PC-3 (cell line): ENCODE measurements at regions of chr1 and their contacts with region 1.

Region 1: GRCh38 chr1:240732390-240732789 is 120.4 kb upstream of the GREM2 start:
- DNase-seq: peak; percentile 88
- ATAC-seq: peak; percentile 92
- H3K4me3 ChIP-seq: no peak overlapping the region
- H3K27ac ChIP-seq: no peak overlapping the region
- H3K4me1 ChIP-seq: peaks cover 8% of the 10 kb centered on the region
- H3K27me3 ChIP-seq: no peaks in the 10 kb centered on the region
- CTCF ChIP-seq: peak; percentile 93

Region 2: GRCh38 chr1:240719953-240720700 is 12.3 kb before region 1 on chr1:
- CTCF ChIA-PET with region 1: no interaction called
- POLR2A ChIA-PET with region 1: no interaction called
- intact Hi-C with region 1: no loop called
- DNase-seq: no peak
- ATAC-seq: no peak
- H3K4me3 ChIP-seq: no peak overlapping the region
- H3K27ac ChIP-seq: no peak overlapping the region
- H3K4me1 ChIP-seq: no peaks in the 10 kb centered on the region
- H3K27me3 ChIP-seq: peaks cover 67% of the 10 kb centered on the region
- CTCF ChIP-seq: no peak

Region 3: GRCh38 chr1:240784776-240785175 is 52.4 kb after region 1 on chr1:
- CTCF ChIA-PET with region 1: interaction called, 3 read pairs
- POLR2A ChIA-PET with region 1: no interaction called
- intact Hi-C with region 1: loop called (anchors 5 kb)
- DNase-seq: no peak
- ATAC-seq: no peak
- H3K4me3 ChIP-seq: no peak overlapping the region
- H3K27ac ChIP-seq: no peak overlapping the region
- H3K4me1 ChIP-seq: peaks cover 24% of the 10 kb centered on the region
- H3K27me3 ChIP-seq: no peaks in the 10 kb centered on the region
- CTCF ChIP-seq: no peak

Region 4: GRCh38 chr1:240854367-240854766 is 122.0 kb after region 1 on chr1:
- CTCF ChIA-PET with region 1: interaction called, 11 read pairs
- POLR2A ChIA-PET with region 1: no interaction called
- intact Hi-C with region 1: loop called (anchors 1 kb)
- DNase-seq: peak; percentile 87
- ATAC-seq: peak; percentile 99
- H3K4me3 ChIP-seq: no peak overlapping the region
- H3K27ac ChIP-seq: no peak overlapping the region
- H3K4me1 ChIP-seq: peaks cover 8% of the 10 kb centered on the region; the same call in 1 of the 2 replicates
- H3K27me3 ChIP-seq: peaks cover 29% of the 10 kb centered on the region
- CTCF ChIP-seq: peak; percentile 76

Region 5: GRCh38 chr1:240888039-240888786 is 155.8 kb after region 1 on chr1:
- CTCF ChIA-PET with region 1: interaction called, 3 read pairs
- POLR2A ChIA-PET with region 1: no interaction called
- intact Hi-C with region 1: loop called (anchors 10 kb)
- DNase-seq: peak; percentile 83
- ATAC-seq: peak; percentile 64
- H3K4me3 ChIP-seq: no peak overlapping the region
- H3K27ac ChIP-seq: no peak overlapping the region
- H3K4me1 ChIP-seq: no peaks in the 10 kb centered on the region
- H3K27me3 ChIP-seq: peaks cover 25% of the 10 kb centered on the region
- CTCF ChIP-seq: peak; percentile 99

Region 6: DNA sequence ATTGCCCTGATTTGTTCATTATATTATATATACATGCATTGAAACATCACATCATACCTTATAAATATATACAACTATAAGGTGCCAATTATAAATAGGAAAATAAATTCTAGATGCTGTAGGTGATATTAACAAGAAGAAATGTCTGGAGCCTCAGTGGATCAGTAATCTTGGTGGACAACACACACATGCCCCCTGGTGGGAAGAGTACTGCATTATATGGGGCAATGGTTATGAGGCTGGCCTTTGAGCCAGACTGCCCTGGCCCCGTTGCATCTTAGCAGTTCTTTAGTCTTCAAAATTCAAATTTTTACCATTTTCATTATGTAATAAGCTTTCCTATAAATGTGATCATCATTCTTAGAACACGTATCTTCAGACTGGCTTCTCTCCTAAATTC is 214.5 kb after region 1 on chr1:
- CTCF ChIA-PET with region 1: no interaction called
- POLR2A ChIA-PET with region 1: no interaction called
- intact Hi-C with region 1: loop called (anchors 1 kb)
- DNase-seq: peak; percentile 89
- ATAC-seq: peak; percentile 99
- H3K4me3 ChIP-seq: no peak overlapping the region
- H3K27ac ChIP-seq: no peak overlapping the region
- H3K4me1 ChIP-seq: no peaks in the 10 kb centered on the region
- H3K27me3 ChIP-seq: peaks cover 49% of the 10 kb centered on the region
- CTCF ChIP-seq: peak; percentile 98

Region 7: GRCh38 chr1:241396747-241397681 is 664.6 kb after region 1 on chr1:
- CTCF ChIA-PET with region 1: no interaction called
- POLR2A ChIA-PET with region 1: no interaction called
- intact Hi-C with region 1: loop called (anchors 10 kb)
- DNase-seq: peak; percentile 60
- ATAC-seq: peak; percentile 56
- H3K4me3 ChIP-seq: no peak overlapping the region
- H3K27ac ChIP-seq: no peak overlapping the region
- H3K4me1 ChIP-seq: peaks cover 26% of the 10 kb centered on the region
- H3K27me3 ChIP-seq: no peaks in the 10 kb centered on the region
- CTCF ChIP-seq: no peak

Region 8: GRCh38 chr1:241499910-241500309 is 767.5 kb after region 1 on chr1:
- CTCF ChIA-PET with region 1: no interaction called
- POLR2A ChIA-PET with region 1: no interaction called
- intact Hi-C with region 1: loop called (anchors 10 kb)
- DNase-seq: peak; percentile 82
- ATAC-seq: peak; percentile 82
- H3K4me3 ChIP-seq: no peak overlapping the region
- H3K27ac ChIP-seq: no peak overlapping the region
- H3K4me1 ChIP-seq: no peaks in the 10 kb centered on the region
- H3K27me3 ChIP-seq: no peaks in the 10 kb centered on the region
- CTCF ChIP-seq: peak; percentile 98